Activated CD8-positive, alpha-beta memory T cell treated with anti-CD3 and anti-CD28 coated beads, Interleukin-2, amount 10 ng/mL, durations not matched to agents 7 days and 5 days (primary cell): ENCODE measurements at regions of chr6 and their contacts with region 1.

Region 1: GRCh38 chr6:31541658-31542521 is at the start of gene DDX39B:
- DNase-seq: peak; percentile 97
- ATAC-seq: peak; percentile 80
- H3K4me3 Mint-ChIP-seq: peak within 1 kb of the TSS; percentile 94
- H3K27ac Mint-ChIP-seq: peak within 1 kb of the TSS; percentile 90
- H3K4me1 Mint-ChIP-seq: peaks cover 50% of the 10 kb centered on the region
- H3K27me3 Mint-ChIP-seq: no peaks in the 10 kb centered on the region
- total RNA-seq, gene DDX39B: 495 to 503 TPM

Region 2: DNA sequence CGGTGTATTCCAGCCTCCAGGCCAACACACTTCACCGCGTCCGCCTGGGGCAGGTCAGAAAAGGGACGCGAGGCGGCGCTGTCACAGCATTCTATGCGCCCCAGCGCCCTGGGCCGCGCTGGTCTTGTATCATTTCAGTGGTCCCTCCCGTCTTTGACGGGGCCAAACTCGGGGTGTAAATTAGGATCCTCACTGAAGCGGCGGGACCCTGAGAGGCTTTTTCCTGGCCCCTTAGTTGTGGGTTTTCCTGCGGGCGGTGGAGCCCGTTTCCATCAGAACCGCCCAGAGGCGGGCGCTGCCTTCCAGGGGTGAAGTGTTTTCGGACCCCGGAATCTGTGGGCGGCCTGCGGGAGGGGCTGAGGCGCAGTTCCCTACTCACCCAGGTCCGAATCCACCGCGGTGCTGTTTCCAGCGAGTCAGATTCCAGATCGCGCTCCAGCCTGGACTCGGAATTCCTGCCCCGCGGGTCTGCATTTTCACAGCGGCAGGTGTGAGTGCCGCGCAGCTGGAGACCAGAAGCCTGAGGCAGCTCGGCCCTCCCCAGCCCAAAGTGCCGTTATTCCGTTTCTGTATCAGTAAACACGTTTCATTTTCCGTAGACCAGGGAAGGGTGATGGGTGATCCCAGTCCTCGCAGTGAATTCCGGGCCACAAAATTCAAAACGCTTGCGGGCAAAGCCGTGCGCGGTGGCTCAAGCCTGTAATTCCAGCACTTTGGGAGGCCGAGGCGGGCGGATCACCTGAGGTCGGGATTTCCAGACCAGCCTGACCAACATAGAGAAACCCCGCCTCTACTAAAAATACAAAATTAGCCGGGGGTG is 47.8 kb before region 1 on chr6:
- CTCF ChIA-PET with region 1: interaction called, 88 read pairs
- DNase-seq: peak; percentile 86
- ATAC-seq: peak; percentile 54
- H3K4me3 Mint-ChIP-seq: peak overlapping the region; percentile 76
- H3K27ac Mint-ChIP-seq: peak overlapping the region; percentile 96
- H3K4me1 Mint-ChIP-seq: peaks cover 56% of the 10 kb centered on the region
- H3K27me3 Mint-ChIP-seq: no peaks in the 10 kb centered on the region

Region 3: DNA sequence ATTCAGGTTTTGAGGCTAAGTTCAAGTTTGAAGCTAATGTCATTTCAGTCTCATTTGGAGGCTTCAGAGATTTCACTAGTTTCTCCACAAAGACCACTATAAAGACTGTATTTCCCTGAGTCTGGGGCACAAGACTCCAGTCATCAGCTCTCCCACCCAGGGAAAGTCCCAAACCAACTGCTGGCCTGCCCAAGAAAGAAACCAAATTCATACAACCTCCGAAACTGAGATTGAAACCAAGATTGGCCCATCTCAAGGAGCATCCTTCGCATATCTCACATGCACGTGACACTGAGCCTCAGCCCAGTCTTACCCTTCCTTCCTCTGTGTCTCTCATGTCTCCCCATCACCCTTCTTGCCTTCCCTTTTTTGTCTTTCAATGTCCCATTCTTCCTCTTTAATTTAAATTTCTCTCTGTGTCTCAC is 26.7 kb after region 1 on chr6:
- CTCF ChIA-PET with region 1: interaction called, 102 read pairs
- DNase-seq: peak; percentile 89
- ATAC-seq: peak; percentile 68
- H3K4me3 Mint-ChIP-seq: peak overlapping the region; percentile 8
- H3K27ac Mint-ChIP-seq: peak overlapping the region; percentile 67
- H3K4me1 Mint-ChIP-seq: peaks cover 63% of the 10 kb centered on the region
- H3K27me3 Mint-ChIP-seq: peaks cover 49% of the 10 kb centered on the region